Heart right ventricle (tissue), 16 donors: ENCODE measurements at regions of chr17 and their contacts with region 1.

Region 1: GRCh38 chr17:32349854-32350665 is at the start of gene ZNF207:
- DNase-seq: peak; percentile 93 to 96
- ATAC-seq: peak; percentile 97 to 100 (median 100)
- H3K4me3 ChIP-seq: peak within 1 kb of the TSS; percentile 66 to 95 (median 82)
- H3K27ac ChIP-seq: peak within 1 kb of the TSS; percentile 73 to 98 (median 94)
- H3K4me1 ChIP-seq: peaks cover 14 to 51% (median 45%) of the 10 kb centered on the region in 9 donors
- H3K27me3 ChIP-seq: no peaks in the 10 kb centered on the region
- CTCF ChIP-seq: no peak
- total RNA-seq, gene ZNF207: 68.4 to 86.7 (median 79.3) TPM

Region 2: GRCh38 chr17:32298298-32298697 is 51.8 kb before region 1 on chr17:
- intact Hi-C with region 1: no loop called
- DNase-seq: no peak
- ATAC-seq: no peak
- H3K4me3 ChIP-seq: no peak overlapping the region
- H3K27ac ChIP-seq: no peak overlapping the region
- H3K4me1 ChIP-seq: no peaks in the 10 kb centered on the region
- H3K27me3 ChIP-seq: no peaks in the 10 kb centered on the region
- CTCF ChIP-seq: no peak

Region 3: DNA sequence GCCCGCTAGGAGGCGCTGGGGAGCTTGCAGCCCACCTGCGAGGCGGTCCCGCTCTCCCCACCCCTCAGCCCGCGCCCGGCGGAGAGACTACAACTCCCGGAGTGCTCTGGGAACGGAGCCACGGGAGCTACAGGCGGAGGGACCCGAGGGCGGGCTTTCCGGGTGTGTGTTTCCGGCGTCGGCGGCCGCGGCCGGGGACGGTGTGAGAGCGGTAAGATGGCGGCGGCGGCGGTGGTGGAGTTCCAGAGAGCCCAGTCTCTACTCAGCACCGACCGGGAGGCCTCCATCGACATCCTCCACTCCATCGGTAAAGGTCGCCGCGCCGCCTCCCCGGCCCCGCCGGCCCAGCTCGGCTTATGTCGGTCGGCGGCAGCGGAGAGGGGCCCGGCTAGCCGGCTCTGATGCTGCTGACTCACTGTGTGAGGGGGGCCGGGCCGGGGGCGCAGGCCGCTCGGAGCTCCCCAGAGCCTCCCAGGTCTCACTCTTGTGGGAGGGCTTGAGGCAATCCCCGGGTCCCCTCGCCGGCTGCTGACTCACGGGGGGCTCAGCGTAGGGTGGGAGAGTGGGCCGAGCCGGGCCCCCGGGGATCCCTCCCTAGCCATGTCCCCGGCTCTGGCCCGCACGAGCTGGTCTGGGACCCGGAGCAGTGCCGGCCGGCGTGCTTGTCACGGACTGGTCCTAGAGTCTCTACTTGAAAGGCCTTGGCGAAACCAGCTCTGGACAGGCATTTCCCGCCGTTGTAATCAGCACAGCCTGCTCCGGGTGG is 94.4 kb after region 1 on chr17 and contains the start of gene PSMD11:
- intact Hi-C with region 1: loop called in 2 of 10 experiments (anchors 5 to 10 kb)
- DNase-seq: peak; percentile 98
- ATAC-seq: peak; percentile 98 to 99 (median 98)
- H3K4me3 ChIP-seq: peak within 1 kb of the TSS; percentile 71 to 100 (median 93)
- H3K27ac ChIP-seq: peak within 1 kb of the TSS; percentile 69 to 95 (median 90)
- H3K4me1 ChIP-seq: peaks cover 2 to 34% (median 28%) of the 10 kb centered on the region in 9 donors
- H3K27me3 ChIP-seq: no peaks in the 10 kb centered on the region
- CTCF ChIP-seq: peak in 3 of 9 donors; percentile 87 to 97 (median 95)
- total RNA-seq, gene PSMD11: 74.9 to 102 (median 84.1) TPM